CD4-positive, alpha-beta memory T cell (primary cell): ENCODE measurements at regions of chr15 and their contacts with region 1.

Region 1: DNA sequence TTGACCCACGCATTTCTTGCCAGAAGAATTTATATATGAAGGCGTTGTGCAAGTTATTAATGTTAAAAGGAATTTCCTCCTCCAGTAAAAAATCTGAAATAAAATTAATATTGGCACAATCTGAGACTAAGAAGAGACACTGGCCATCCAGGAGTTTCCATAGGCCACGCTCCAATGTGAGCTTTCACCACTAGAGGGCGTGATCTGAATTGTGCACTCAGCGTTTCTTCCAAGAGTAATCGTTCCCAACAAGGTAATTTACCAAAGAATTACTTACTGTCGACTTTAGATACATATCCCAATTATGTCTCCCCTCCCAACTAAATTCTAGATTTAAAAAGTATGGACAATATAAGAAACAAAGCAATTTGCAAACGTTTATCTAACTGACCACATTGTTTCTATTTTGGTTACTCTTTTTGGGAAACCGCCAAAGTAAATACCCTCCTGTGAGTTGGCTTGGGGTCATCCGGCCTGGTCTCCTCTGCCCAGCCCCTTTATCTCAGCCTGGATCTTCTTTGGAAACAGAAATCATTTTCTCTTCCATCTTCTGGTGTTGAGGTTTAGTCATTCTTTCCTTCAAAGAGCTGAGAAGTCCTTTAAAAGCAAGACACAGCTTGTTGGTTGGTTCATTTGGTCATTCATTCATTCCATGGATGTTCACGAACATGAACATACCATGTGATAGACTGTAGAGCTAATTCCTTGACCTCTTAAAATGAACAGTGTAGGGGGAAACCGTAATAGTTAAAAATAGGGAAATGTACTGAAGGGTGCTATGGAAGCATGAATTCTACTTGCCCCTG is 26.2 kb downstream of the POLR2M start:
- DNase-seq: peak in 4 of 5 donors; percentile 14 to 29 (median 24)
- H3K4me3 ChIP-seq: no peak overlapping the region
- H3K4me3 Mint-ChIP-seq: no peak overlapping the region
- H3K27ac ChIP-seq: no peak overlapping the region
- H3K27ac Mint-ChIP-seq: peak overlapping the region in 1 of 7 donors; percentile 4
- H3K4me1 ChIP-seq: no peaks in the 10 kb centered on the region
- H3K4me1 Mint-ChIP-seq: peaks cover 0 to 7% (median 3%) of the 10 kb centered on the region in 4 donors
- H3K27me3 ChIP-seq: no peaks in the 10 kb centered on the region
- H3K27me3 Mint-ChIP-seq: no peaks in the 10 kb centered on the region

Region 2: DNA sequence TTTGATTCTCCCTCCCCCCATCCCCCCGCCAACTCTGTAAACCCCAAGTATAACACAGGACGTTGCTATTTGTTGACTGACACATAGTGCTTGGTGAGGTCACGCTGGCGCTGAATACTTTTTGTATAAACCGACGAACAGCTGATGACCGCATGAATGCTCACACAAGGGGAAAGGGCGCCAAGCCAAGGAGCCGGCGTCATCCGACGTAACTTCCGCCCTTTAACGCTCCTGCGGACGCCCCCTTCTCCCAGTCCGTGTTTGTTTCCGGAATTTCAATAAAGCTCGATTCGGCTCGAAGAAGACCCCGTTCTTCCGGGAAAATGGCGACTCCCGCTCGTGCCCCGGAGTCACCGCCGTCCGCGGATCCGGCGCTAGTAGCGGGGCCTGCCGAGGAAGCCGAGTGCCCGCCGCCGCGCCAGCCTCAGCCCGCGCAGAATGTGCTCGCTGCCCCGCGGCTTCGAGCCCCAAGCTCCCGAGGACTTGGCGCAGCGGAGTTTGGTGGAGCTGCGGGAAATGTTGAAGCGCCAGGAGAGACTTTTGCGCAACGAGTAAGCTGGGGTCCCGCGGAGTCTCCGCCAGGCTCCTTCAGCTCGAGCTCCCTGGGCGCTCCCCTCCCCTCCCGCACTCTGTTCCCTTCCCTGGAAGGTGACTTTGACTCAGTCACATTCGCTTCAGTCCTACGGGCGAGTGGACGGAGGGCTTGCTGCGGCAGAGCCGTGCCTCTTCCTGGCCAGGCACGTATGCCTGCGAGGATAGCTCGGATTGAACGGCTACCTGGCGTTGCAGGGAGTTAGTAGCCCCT is 26.1 kb before region 1 on chr15 and contains the start of gene POLR2M:
- CTCF ChIA-PET with region 1: interaction called, 23 read pairs
- POLR2A ChIA-PET with region 1: interaction called, 3 read pairs
- intact Hi-C with region 1: no loop called
- DNase-seq: peak; percentile 90 to 97 (median 93)
- H3K4me3 ChIP-seq: peak within 1 kb of the TSS; percentile 77 to 94
- H3K4me3 Mint-ChIP-seq: peak within 1 kb of the TSS; percentile 87 to 93 (median 90)
- H3K27ac ChIP-seq: peak within 1 kb of the TSS; percentile 84
- H3K27ac Mint-ChIP-seq: peak within 1 kb of the TSS; percentile 84 to 98 (median 97)
- H3K4me1 ChIP-seq: peaks cover 65% of the 10 kb centered on the region
- H3K4me1 Mint-ChIP-seq: peaks cover 51 to 88% (median 75%) of the 10 kb centered on the region in 4 donors
- H3K27me3 ChIP-seq: no peaks in the 10 kb centered on the region
- H3K27me3 Mint-ChIP-seq: no peaks in the 10 kb centered on the region
- total RNA-seq, gene POLR2M: 86.5 to 97.3 TPM

Region 3: GRCh38 chr15:57720867-57721266 is 11.9 kb before region 1 on chr15:
- CTCF ChIA-PET with region 1: interaction called, 42 read pairs
- POLR2A ChIA-PET with region 1: no interaction called
- intact Hi-C with region 1: no loop called
- DNase-seq: no peak
- H3K4me3 ChIP-seq: no peak overlapping the region
- H3K4me3 Mint-ChIP-seq: no peak overlapping the region
- H3K27ac ChIP-seq: no peak overlapping the region
- H3K27ac Mint-ChIP-seq: no peak overlapping the region
- H3K4me1 ChIP-seq: no peaks in the 10 kb centered on the region
- H3K4me1 Mint-ChIP-seq: peaks cover 0 to 5% (median 4%) of the 10 kb centered on the region in 4 donors
- H3K27me3 ChIP-seq: no peaks in the 10 kb centered on the region
- H3K27me3 Mint-ChIP-seq: no peaks in the 10 kb centered on the region

Region 4: GRCh38 chr15:57743424-57743823 is 10.7 kb after region 1 on chr15:
- CTCF ChIA-PET with region 1: interaction called, 50 read pairs
- POLR2A ChIA-PET with region 1: no interaction called
- intact Hi-C with region 1: no loop called
- DNase-seq: no peak
- H3K4me3 ChIP-seq: no peak overlapping the region
- H3K4me3 Mint-ChIP-seq: no peak overlapping the region
- H3K27ac ChIP-seq: no peak overlapping the region
- H3K27ac Mint-ChIP-seq: no peak overlapping the region
- H3K4me1 ChIP-seq: no peaks in the 10 kb centered on the region
- H3K4me1 Mint-ChIP-seq: no peaks in the 10 kb centered on the region
- H3K27me3 ChIP-seq: no peaks in the 10 kb centered on the region
- H3K27me3 Mint-ChIP-seq: no peaks in the 10 kb centered on the region

Region 5: GRCh38 chr15:57751177-57751800 is 18.6 kb after region 1 on chr15:
- CTCF ChIA-PET with region 1: interaction called, 50 read pairs
- POLR2A ChIA-PET with region 1: no interaction called
- intact Hi-C with region 1: no loop called
- DNase-seq: no peak
- H3K4me3 ChIP-seq: no peak overlapping the region
- H3K4me3 Mint-ChIP-seq: no peak overlapping the region
- H3K27ac ChIP-seq: no peak overlapping the region
- H3K27ac Mint-ChIP-seq: no peak overlapping the region
- H3K4me1 ChIP-seq: no peaks in the 10 kb centered on the region
- H3K4me1 Mint-ChIP-seq: no peaks in the 10 kb centered on the region
- H3K27me3 ChIP-seq: no peaks in the 10 kb centered on the region
- H3K27me3 Mint-ChIP-seq: no peaks in the 10 kb centered on the region